GM12878 (cell line): ENCODE measurements at regions of chr10 and their contacts with region 1.

Region 1: GRCh38 chr10:98016772-98017475 is 13.5 kb downstream of the CRTAC1 start:
- DNase-seq: no peak
- ATAC-seq: no peak
- H3K4me3 ChIP-seq: no peak overlapping the region
- H3K27ac ChIP-seq: no peak overlapping the region
- H3K4me1 ChIP-seq: no peaks in the 10 kb centered on the region
- H3K27me3 ChIP-seq: peaks cover 0 to 3% of the 10 kb centered on the region in 2 experiments; a peak in 3 of 4 replicates
- CTCF ChIP-seq: no peak
- EP300 ChIP-seq: no peak
- POLR2A ChIP-seq: no peak
- RAD21 ChIP-seq: no peak

Region 2: DNA sequence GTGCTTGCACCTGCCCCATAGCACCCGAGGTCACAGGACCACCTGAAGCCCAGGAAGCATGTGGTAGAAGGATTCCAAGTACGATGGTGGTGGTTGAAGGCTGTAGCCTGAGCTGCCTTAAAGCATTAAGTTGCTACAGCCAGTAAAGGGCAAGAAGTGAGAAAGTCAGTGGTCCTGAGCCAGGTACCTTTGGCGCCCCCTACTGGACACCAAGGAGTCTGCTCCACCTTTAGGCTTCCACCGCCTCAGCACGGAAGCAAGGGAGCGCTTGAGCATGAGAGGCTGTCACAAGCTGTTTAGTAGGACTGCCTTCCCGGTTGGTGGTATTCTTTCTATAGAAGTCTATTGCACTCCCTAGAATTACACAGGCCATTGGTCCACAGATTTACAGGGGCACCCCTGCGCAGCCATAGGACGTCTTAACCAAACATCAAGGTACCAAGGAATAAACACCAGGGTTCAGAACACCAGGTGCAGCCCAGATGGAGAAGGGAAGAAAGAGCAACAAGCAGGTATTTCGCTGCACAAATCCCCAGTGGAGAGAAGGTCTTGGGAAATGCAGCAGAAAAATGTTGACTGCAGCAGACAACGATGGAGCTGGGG is 11.3 kb after region 1 on chr10:
- CTCF ChIA-PET with region 1: interaction called, 13 read pairs
- POLR2A ChIA-PET with region 1: no interaction called
- RAD21 ChIA-PET with region 1: no interaction called
- SMC1A ChIA-PET with region 1: no interaction called
- in situ Hi-C with region 1: no loop called
- intact Hi-C with region 1: no loop called
- DNase-seq: no peak
- ATAC-seq: peak; percentile 88
- H3K4me3 ChIP-seq: no peak overlapping the region
- H3K27ac ChIP-seq: no peak overlapping the region
- H3K4me1 ChIP-seq: no peaks in the 10 kb centered on the region
- H3K27me3 ChIP-seq: peaks cover 6% of the 10 kb centered on the region in 2 experiments
- CTCF ChIP-seq: peak; percentile 76 to 86 (median 82)
- EP300 ChIP-seq: no peak
- POLR2A ChIP-seq: no peak
- RAD21 ChIP-seq: peak; percentile 37

Region 3: DNA sequence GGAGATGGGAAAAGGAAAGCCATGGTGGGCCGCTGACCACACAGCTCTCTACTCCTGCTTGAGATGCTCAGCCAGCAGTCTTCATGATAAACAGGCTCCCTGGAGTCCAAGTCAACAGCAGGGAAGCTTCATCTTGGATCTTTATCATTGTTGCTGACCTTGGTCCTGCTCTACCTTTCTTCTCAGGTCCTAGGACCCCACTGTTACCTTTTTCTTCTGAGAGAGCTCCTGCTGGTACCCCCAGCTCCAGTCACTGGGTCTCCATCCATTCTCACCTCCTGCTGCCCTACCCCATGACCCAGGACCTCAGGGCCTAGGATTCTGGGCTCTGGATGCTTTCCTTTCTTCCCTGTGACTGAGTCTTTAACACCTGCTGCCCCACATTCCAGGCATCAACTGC is 18.7 kb after region 1 on chr10:
- CTCF ChIA-PET with region 1: no interaction called
- POLR2A ChIA-PET with region 1: no interaction called
- RAD21 ChIA-PET with region 1: no interaction called
- SMC1A ChIA-PET with region 1: no interaction called
- in situ Hi-C with region 1: no loop called
- intact Hi-C with region 1: loop called (anchors 2 kb)
- DNase-seq: no peak
- ATAC-seq: no peak
- H3K4me3 ChIP-seq: no peak overlapping the region
- H3K27ac ChIP-seq: no peak overlapping the region
- H3K4me1 ChIP-seq: no peaks in the 10 kb centered on the region
- H3K27me3 ChIP-seq: peaks cover 3 to 15% of the 10 kb centered on the region in 2 experiments
- CTCF ChIP-seq: no peak
- EP300 ChIP-seq: no peak
- POLR2A ChIP-seq: no peak
- RAD21 ChIP-seq: no peak